Heart left ventricle (tissue), 16 donors: ENCODE measurements at regions of chr20 and their contacts with region 1.

Region 1: GRCh38 chr20:23257848-23258746 is 92.5 kb upstream of the NXT1 start:
- DNase-seq: peak in 1 of 5 donors; percentile 56
- ATAC-seq: peak; percentile 66 to 95 (median 86)
- H3K4me3 ChIP-seq: no peak overlapping the region
- H3K27ac ChIP-seq: peak overlapping the region; percentile 46 to 82 (median 66)
- H3K4me1 ChIP-seq: peaks cover 6 to 40% (median 24%) of the 10 kb centered on the region in 12 donors
- H3K27me3 ChIP-seq: no peaks in the 10 kb centered on the region
- CTCF ChIP-seq: no peak
- POLR2A ChIP-seq: no peak

Region 2: DNA sequence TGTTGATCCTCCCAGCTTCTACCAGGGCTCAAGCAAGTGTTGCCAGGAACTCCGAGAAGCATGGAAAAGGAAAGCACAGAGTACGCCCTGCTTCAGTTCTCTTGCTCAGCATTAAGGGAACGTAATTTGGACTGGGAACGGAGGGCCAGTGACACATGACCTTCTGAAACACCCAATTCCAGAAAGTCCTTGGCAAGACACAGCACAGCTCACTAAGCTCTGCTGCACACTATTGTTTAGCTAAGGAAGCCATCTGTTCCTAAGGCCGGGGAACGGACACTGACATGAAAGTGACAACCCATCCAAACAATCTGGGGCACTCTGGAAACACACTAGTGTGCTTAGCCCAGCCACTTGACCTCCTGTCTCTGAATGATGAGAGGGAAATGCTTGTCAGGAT is 35.6 kb after region 1 on chr20:
- intact Hi-C with region 1: loop called in 1 of 10 experiments (anchors 1 kb)
- DNase-seq: peak in 3 of 5 donors; percentile 36 to 45 (median 42)
- ATAC-seq: peak; percentile 73 to 91 (median 86)
- H3K4me3 ChIP-seq: no peak overlapping the region
- H3K27ac ChIP-seq: peak overlapping the region; percentile 9 to 79 (median 61)
- H3K4me1 ChIP-seq: peaks cover 4 to 30% (median 12%) of the 10 kb centered on the region in 12 donors
- H3K27me3 ChIP-seq: no peaks in the 10 kb centered on the region
- CTCF ChIP-seq: no peak
- POLR2A ChIP-seq: no peak